Heart right ventricle (tissue), 16 donors: ENCODE measurements at regions of chr9 and their contacts with region 1.

Region 1: DNA sequence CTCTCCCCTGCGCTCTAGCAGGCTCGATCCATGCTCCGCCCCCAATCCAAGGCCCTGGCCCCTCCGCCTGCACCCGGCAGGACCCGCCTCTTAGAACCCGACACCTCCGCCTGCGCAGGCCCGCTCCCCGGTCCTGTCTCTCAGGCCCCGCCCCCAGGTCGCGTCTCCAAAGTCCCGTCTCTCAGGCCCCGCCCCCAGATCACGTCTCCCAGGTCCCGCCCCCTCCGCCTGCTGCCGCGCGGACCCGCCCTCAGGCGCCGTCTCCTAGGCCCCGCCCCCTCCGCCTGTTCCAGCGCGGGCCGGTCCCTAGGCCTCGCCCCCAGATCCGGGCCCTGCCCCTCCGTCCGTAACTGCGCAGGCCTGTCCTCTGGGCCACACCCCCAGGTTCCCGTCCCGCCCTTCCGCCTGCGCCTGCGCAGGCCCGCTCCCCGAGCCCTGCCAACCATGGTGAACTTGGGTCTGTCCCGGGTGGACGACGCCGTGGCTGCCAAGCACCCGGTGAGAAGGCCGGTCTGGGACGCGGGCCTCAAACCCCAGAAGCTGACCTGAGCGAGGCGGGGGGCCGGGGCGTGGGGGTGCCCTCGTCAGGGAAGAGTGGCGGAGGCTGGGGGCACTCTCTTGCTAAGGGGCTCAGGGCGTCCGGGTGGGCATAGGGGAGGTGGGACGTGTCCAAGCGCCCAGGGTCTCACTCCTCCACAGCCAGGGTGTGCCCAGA is at the start of gene TMEM141:
- DNase-seq: peak; percentile 100
- ATAC-seq: peak; percentile 95 to 98 (median 95)
- H3K4me3 ChIP-seq: peak within 1 kb of the TSS; percentile 57 to 93 (median 77)
- H3K27ac ChIP-seq: peak within 1 kb of the TSS; percentile 88 to 98 (median 96)
- H3K4me1 ChIP-seq: peaks cover 13 to 65% (median 40%) of the 10 kb centered on the region in 9 donors
- H3K27me3 ChIP-seq: peaks cover 0 to 3% (median 0%) of the 10 kb centered on the region in 7 donors
- CTCF ChIP-seq: no peak
- total RNA-seq, gene TMEM141: 48.1 to 83.4 (median 61.8) TPM

Region 2: DNA sequence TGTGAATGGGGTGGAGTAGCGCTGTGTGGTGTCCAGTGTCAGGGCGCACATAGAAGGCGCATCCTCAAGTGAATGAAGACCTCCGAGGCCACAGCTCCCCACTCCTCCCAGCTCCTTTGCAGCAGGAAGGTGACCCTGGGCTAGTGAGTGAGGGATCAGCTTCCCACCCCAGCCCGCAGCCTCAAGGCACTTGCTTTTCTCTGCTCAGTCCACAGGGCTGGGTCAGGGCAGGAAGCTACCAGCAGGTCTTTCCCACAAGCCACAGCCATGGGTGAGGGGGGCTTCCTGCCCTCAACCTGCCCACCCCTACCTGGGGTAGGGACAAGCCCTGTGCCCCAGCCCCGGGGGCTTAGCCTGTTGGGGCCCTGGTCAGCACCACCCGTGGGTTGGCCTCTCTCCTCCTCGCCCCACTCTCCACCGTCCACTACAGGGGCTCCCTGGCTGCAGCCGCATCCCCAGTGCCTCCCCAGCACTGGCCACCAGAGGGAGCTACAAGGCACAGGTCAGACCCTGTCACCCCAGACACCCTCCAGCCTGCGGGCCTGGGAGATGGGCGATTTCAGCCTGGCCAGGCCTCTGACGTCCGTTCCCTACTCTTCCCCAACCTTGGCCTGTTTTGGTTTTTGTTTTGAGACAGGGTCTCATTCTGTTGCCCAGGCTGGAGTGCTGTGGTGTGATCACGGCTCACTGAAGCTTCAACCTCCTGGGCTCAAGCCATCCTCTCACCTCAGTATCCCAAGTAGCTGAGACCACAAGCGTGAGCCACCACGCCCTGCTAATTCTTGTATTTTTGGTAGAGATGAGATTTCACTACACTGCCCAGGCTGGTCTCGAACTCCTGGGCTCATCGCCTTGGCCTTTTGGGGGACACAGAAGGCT is 238.2 kb after region 1 on chr9:
- intact Hi-C with region 1: loop called in 4 of 10 experiments (anchors 2 to 5 kb)
- DNase-seq: peak; percentile 78 to 88
- ATAC-seq: peak; percentile 59 to 83 (median 70)
- H3K4me3 ChIP-seq: peak overlapping the region in 9 of 10 donors; percentile 1 to 88 (median 68)
- H3K27ac ChIP-seq: peak overlapping the region in 3 of 10 donors; percentile 15 to 83 (median 53)
- H3K4me1 ChIP-seq: peaks cover 12 to 55% (median 30%) of the 10 kb centered on the region in 9 donors
- H3K27me3 ChIP-seq: no peaks in the 10 kb centered on the region
- CTCF ChIP-seq: peak; percentile 82 to 96 (median 89)

Region 3: DNA sequence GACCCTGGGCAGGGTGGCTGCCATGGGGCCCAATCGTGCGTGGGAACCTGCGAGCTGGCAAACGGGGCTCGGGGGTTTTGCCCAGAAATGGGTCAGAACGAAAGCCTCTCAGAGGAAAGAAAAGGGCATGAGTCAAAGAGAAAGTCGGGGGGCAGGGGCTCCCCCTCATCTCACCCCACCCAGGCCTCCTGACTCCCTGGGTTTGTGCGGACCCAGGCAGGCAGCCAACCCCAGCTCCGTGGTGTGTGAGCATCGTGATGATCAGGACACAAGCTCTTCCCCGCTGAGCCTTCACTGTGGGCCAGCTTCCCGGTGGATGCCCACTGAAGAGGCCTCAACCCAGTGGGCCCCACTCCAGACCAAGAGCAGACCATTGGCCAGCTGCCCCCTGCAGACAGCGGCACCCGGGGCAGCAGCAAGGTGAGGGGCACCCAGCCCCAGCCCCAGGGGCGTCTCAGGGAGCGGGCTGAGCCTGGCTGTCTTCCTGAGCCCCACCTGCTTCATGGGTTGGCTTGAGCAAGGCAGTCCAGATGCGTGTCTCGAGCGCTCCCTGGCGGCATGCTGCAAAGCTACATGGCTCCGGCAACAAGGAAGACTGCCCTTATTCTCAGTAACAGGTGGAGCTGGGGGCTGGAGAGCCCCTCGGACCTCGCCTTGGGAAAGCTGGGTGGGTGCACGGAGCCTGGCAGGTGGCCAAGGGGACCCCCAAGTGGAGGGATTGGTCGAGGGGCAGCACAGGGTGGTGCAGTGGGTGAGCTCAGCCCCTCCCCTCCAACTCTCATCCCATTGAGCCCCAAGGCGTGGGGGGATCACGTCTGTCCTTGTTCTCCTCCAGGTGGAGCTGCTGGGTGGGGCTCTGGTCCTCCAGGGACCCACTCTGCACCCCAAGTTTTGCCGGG is 244.0 kb after region 1 on chr9:
- intact Hi-C with region 1: loop called in 8 of 10 experiments (anchors 1 to 5 kb)
- DNase-seq: peak; percentile 76 to 86
- ATAC-seq: peak; percentile 67 to 89 (median 79)
- H3K4me3 ChIP-seq: peak overlapping the region in 1 of 10 donors; percentile 15
- H3K27ac ChIP-seq: peak overlapping the region in 2 of 10 donors; percentile 6 to 83
- H3K4me1 ChIP-seq: peaks cover 6 to 43% (median 11%) of the 10 kb centered on the region in 9 donors
- H3K27me3 ChIP-seq: no peaks in the 10 kb centered on the region
- CTCF ChIP-seq: peak; percentile 88 to 95 (median 93)

Region 4: DNA sequence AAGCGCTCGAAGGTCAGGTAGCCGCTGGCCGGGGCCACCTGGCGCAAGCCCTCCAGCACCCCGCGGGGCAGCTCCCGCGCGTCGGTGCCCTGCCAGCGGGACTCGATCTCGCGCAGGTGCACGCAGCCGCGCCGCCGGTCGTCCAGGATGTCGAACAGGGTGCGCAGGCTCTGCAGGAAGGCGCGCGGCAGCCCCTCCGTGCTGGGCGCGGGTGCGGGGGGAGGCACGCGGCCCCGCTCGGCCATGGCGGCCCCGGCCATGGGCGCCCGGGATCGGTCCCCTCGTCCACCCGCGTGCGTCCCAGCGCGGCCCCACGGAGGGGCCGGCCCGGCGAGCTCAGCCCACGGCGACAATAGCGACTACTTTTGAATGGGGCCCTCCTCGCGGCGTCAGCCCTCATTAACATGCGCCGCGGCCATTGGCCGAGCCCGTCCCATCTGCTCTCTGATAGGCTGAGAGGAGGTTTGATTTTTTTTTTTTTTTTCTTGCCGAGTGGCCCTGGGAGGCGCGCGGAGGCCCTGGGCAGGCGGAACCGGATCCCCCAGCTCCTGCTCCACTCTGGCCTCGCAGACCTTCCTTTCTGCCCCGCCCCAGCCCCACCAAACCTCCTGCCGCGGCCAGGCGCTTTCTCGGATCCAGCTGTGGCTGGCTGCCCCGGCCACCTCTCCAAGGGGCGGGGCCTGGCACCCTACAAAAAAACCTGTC is 279.3 kb after region 1 on chr9 and contains the start of gene SAPCD2:
- intact Hi-C with region 1: loop called in 1 of 10 experiments (anchors 10 kb)
- DNase-seq: peak; percentile 87 to 88
- ATAC-seq: peak; percentile 88 to 97 (median 94)
- H3K4me3 ChIP-seq: peak within 1 kb of the TSS in 9 of 10 donors; percentile 12 to 58 (median 50)
- H3K27ac ChIP-seq: peak within 1 kb of the TSS; percentile 59 to 86 (median 82)
- H3K4me1 ChIP-seq: peaks cover 7 to 45% (median 16%) of the 10 kb centered on the region in 9 donors
- H3K27me3 ChIP-seq: peaks cover 0 to 15% (median 9%) of the 10 kb centered on the region in 7 donors
- CTCF ChIP-seq: no peak
- total RNA-seq, gene SAPCD2: 0.06 to 1.1 (median 0.11) TPM in 9 of 10 donors, not detected in the other

Region 5: GRCh38 chr9:137240861-137241489 is 449.9 kb after region 1 on chr9 and contains the start of gene TUBB4B:
- intact Hi-C with region 1: loop called in 1 of 10 experiments (anchors 10 kb)
- DNase-seq: peak; percentile 99 to 100
- ATAC-seq: peak; percentile 85 to 94 (median 89)
- H3K4me3 ChIP-seq: peak within 1 kb of the TSS; percentile 75 to 97 (median 92)
- H3K27ac ChIP-seq: peak within 1 kb of the TSS; percentile 91 to 100 (median 98)
- H3K4me1 ChIP-seq: peaks cover 16 to 71% (median 53%) of the 10 kb centered on the region in 9 donors
- H3K27me3 ChIP-seq: no peaks in the 10 kb centered on the region
- CTCF ChIP-seq: no peak
- total RNA-seq, gene TUBB4B: 211 to 495 (median 330) TPM